ENCODE measurements at regions of chr10 and their contacts with region 1.

Region 1: DNA sequence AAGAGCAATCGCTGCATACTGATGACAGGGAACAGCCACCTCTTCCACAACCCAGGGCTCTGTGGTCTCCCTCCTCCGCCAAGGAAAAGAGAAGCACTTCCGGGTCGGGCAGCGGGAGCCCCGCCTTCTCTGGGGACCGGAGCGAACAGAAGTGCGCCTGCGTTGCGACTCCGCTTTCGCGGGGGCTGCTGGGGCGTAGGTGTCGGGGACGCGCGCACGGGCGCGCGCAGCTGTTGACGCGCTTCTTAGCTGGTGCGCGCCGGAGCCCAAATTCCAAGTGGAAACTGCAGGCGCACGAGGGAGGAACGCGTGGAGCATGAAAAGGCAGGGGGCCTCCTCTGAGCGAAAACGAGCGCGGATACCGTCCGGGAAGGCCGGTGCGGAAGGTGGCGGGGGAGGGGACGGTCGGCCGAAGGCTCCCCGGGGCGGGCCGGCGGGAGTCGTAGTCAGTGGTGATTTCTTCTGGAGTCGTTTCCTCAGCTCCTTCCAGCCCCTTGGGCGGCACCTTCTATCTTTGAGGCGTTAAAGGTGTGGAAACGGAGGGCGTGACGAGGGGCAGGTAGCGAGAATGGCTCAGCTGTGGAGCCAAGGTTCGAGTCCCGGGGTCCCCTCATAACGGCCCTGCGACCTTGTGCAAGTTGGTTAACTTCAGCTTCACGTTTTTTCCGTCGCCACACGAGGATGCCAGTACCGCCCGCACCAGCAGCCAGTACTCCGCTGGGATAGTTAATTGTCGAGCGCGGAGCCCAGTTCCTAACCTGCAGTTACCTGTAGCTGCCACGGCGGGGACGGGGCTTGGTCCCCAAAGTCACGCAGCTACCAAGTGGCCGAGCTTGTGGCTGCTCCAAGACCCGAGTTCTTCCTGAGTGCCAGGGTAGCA is at the starts of genes COX15 and CUTC:
- DNase-seq: peak; percentile 87 to 90
- H3K4me3 ChIP-seq: peak within 1 kb of the TSS; percentile 93
- H3K27ac ChIP-seq: peak within 1 kb of the TSS; percentile 86
- H3K4me1 ChIP-seq: peaks cover 10% of the 10 kb centered on the region; the same call in 1 of the 2 replicates
- H3K27me3 ChIP-seq: no peaks in the 10 kb centered on the region
- CTCF ChIP-seq: peak; percentile 64
- total RNA-seq, gene COX15: 31.4 and 35.2 TPM in 2 replicates
- total RNA-seq, gene CUTC: 7.6 and 9.2 TPM in 2 replicates

Region 2: DNA sequence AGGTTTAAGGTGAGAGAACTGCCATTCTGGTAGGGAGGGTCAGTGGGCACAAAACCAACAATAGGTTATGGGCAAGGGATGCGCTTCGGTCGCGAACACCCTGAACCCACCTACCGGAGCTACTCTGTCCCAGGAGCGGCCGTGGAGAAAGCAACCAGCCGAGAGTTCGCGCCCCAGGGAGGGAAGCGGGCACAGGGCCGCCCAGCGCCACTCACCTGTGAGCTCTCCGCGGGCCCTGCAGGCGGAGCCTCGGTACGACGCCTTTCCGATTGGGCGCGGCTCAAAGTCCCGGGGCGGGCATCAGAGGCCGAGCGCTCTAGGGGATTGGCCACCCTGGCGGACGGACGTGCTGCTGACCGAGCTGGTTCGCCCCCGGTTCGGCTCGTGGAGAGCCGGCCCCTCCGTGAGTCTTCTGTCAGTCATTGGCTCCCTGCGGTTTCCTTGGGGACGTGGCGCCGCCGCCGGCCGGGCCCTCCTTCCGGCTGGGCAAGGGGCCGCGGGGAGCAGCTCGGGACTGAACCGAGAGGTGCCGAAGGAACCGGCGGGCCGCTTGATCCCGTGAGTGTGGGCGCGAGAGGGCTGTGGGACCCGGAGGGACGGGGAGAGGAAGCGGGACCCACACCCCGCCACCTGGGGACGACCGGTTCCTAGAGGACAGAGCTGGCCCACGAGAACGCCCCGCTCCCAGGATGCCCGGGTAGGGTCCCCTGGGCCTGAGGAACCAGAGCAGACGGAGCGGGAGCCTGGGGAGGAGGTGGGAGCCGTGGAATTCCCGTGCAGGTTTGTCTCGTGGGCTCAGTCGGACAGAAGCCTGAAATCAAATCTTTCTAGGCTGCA is 73.0 kb before region 1 on chr10 and contains the start of gene ENTPD7:
- CTCF ChIA-PET with region 1: interaction called, 4 read pairs
- POLR2A ChIA-PET with region 1: interaction called, 12 read pairs
- intact Hi-C with region 1: no loop called
- DNase-seq: peak; percentile 89 to 93
- H3K4me3 ChIP-seq: peak within 1 kb of the TSS; percentile 98
- H3K27ac ChIP-seq: peak within 1 kb of the TSS; percentile 12; the same call in 1 of the 2 replicates
- H3K4me1 ChIP-seq: peaks cover 37% of the 10 kb centered on the region
- H3K27me3 ChIP-seq: no peaks in the 10 kb centered on the region
- CTCF ChIP-seq: no peak; the same call in 1 of the 2 replicates
- total RNA-seq, gene ENTPD7: 4.2 and 5.4 TPM in 2 replicates

Region 3: GRCh38 chr10:99766302-99766681 is 34.0 kb after region 1 on chr10:
- CTCF ChIA-PET with region 1: no interaction called
- POLR2A ChIA-PET with region 1: no interaction called
- intact Hi-C with region 1: no loop called
- DNase-seq: no peak
- H3K4me3 ChIP-seq: no peak overlapping the region
- H3K27ac ChIP-seq: no peak overlapping the region
- H3K4me1 ChIP-seq: no peaks in the 10 kb centered on the region
- H3K27me3 ChIP-seq: no peaks in the 10 kb centered on the region
- CTCF ChIP-seq: no peak

Region 4: GRCh38 chr10:99808270-99808669 is 76.0 kb after region 1 on chr10:
- CTCF ChIA-PET with region 1: no interaction called
- POLR2A ChIA-PET with region 1: interaction called, 25 read pairs
- intact Hi-C with region 1: no loop called
- DNase-seq: no peak
- H3K4me3 ChIP-seq: no peak overlapping the region
- H3K27ac ChIP-seq: no peak overlapping the region
- H3K4me1 ChIP-seq: no peaks in the 10 kb centered on the region
- H3K27me3 ChIP-seq: no peaks in the 10 kb centered on the region
- CTCF ChIP-seq: no peak

Measured in PC-9 (cell line).